ENCODE measurements at regions of chr12 and their contacts with region 1.

Region 1: GRCh38 chr12:114704096-114704495 is 20.1 kb upstream of the TBX3 start:
- DNase-seq: no peak
- H3K27ac ChIP-seq: no peak overlapping the region
- CTCF ChIP-seq: no peak

Region 2: DNA sequence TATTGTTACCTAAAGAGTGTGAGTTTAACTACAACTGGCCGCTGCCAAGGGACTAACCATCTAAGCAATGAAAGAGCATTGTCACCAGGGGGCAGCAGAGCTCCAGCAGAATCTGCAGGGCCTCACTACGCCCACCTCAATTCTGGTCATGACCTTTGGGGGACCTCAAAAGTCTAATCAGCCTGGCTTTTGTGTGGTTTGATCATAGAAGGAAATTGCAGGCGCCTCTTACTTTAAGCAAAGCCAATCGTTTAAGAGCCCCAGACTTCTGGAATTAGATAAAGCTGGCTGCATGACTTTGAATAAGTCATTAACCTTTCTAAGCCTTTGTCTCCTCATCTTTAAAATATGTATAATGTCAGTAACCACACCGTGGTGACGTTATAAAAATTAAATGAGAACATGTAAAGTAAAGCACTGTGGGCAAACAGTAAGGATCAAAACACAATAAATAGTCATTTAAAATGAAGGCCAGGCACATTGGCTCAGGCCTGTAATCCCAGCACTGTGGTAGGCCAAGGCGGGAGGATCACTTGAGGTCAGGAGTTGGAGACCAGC is 78.7 kb before region 1 on chr12:
- CTCF ChIA-PET with region 1: no interaction called
- POLR2A ChIA-PET with region 1: no interaction called
- DNase-seq: peak; percentile 52
- H3K27ac ChIP-seq: no peak overlapping the region
- CTCF ChIP-seq: peak; percentile 72

Region 3: GRCh38 chr12:114770071-114770915 is 66.2 kb after region 1 on chr12:
- CTCF ChIA-PET with region 1: interaction called, 12 read pairs
- POLR2A ChIA-PET with region 1: no interaction called
- DNase-seq: no peak
- H3K27ac ChIP-seq: no peak overlapping the region
- CTCF ChIP-seq: no peak

Measured in RWPE1 (cell line).